ENCODE measurements at regions of chr2 and their contacts with region 1.

Region 1: DNA sequence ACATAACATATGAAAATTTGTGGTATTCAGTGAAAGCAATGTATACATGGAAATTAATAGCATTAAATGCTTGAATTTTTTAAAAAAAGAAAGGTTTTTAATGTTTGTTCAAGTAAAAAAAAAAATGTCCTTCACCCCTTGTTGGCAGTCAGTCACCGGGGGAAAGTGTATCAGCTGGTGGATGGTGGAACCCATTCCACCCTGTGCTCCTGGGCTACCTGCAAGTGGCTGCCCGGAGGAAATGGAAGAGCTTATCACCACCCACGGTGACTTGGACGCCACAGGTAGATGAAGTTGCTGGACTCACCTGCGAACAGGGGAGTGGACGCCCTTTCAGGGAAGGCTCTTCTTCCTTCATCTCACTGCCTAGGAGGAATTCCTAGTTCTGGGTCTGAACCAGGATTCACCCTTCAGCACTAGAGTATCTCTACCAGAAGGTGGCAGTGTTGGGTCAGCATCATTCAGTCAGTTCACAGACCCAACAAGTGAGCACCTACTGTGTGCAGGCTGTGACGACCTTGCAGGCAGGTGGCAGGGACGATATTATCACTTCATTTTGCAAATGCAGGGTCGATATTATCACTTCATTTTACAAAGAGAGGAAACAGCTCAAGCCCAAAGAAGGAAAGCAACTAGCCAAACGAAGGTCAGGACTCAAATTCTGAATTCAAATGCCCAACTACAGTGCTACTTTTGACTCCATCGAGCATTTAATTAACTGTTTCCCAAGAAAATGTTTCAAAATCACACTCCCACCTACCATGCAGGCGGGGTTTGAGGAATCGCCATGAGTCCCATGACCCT is 35.8 kb downstream of the CIB4 start:
- DNase-seq: peak; percentile 46
- H3K4me3 Mint-ChIP-seq: no peak overlapping the region
- H3K27ac Mint-ChIP-seq: no peak overlapping the region
- H3K4me1 Mint-ChIP-seq: peaks cover under 1% of the 10 kb centered on the region
- H3K27me3 Mint-ChIP-seq: peaks cover 32% of the 10 kb centered on the region

Region 2: DNA sequence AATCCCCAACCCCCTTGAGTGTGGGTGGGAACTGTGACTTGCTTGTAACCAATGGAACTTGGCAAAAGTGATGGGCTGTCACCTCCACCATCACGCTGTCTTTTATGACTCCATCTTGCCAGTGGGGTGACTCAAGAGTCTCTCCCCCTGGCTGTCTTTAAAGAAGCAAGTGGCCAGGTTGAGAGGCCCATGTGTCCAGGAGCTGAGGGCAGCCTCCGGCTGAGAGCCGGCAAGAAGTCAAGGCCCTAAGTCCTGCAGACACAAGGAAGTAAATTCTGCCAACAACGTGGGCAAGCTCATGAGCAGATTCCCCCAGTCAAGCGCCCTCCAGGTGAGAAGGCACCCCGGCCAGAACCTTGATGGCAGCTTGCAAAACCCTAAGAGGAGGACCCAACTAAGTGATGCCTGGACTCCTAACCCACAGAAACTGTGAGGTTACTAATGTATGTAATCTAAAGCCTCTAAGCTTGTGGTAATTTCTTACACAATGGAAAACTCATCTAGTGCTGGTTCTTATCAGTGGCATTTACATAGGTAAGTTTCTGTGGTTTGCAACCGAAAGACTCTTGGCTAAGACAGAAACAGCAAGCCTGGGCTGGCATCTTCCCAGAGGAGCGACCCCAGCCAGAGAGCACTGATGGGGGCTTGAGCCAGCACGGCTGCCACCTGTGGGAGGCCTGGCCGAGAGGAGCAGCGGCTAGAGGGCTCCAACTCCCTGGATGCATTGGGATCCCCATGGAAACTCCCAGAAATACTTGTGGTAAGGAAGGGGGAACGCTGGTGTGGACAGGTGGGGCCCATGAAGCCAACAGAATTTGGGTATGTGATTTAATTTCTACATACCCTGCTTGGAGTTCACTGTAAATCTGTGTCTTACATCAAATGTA is 13.5 kb before region 1 on chr2:
- CTCF ChIA-PET with region 1: interaction called, 14 read pairs
- POLR2A ChIA-PET with region 1: no interaction called
- DNase-seq: no peak
- H3K4me3 Mint-ChIP-seq: no peak overlapping the region
- H3K27ac Mint-ChIP-seq: no peak overlapping the region
- H3K4me1 Mint-ChIP-seq: peaks cover 5% of the 10 kb centered on the region
- H3K27me3 Mint-ChIP-seq: peaks cover 44% of the 10 kb centered on the region

Region 3: DNA sequence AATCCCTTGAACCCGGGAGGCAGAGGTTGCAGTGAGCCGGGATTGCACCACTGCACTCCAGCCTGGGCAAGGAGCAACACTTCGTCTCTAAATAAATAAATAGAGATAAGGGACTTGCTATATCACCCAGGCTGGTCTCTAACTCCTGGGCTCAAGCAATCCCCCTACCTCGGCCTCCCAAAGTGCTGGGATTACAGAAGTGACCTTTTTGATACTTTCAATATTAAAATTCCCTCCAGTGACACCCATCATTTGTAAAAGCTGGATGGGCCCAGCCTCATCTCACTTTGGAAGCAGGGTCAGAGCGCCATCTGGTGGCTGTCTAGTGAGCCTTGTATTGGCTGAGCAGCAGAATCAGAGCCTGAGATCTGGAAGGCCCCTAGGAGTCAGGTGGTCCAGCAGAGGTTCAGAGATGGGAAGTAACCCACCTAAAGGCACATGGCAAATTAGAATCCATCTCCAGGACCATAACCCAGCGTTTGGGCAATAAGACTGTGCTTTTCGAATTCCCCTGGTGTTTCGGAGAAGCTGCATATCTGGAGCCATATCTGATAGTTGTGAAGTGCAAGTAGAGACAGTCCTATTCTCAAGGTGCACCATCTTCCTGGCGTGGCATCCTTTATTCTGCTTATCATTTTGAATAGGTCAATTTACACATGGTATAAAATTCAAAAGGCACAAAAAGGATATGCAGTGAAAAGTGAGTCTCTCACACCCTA is 140.4 kb after region 1 on chr2:
- CTCF ChIA-PET with region 1: interaction called, 88 read pairs
- POLR2A ChIA-PET with region 1: interaction called, 5 read pairs
- DNase-seq: peak; percentile 80
- H3K4me3 Mint-ChIP-seq: no peak overlapping the region
- H3K27ac Mint-ChIP-seq: no peak overlapping the region
- H3K4me1 Mint-ChIP-seq: peaks cover 5% of the 10 kb centered on the region
- H3K27me3 Mint-ChIP-seq: no peaks in the 10 kb centered on the region

Measured in activated CD4-positive, alpha-beta memory T cell treated with anti-CD3 and anti-CD28 coated beads, Interleukin-2, amount 10 ng/mL, durations not matched to agents 7 days and 5 days (primary cell).